Left ventricle myocardium inferior (tissue), 1 donor: ENCODE measurements at regions of chr14 and their contacts with region 1.

Region 1: GRCh38 chr14:96297000-96297399 is 41.0 kb downstream of the BDKRB1 start:
- DNase-seq: no peak
- H3K4me3 ChIP-seq: no peak overlapping the region
- H3K27ac ChIP-seq: no peak overlapping the region
- H3K4me1 ChIP-seq: no peaks in the 10 kb centered on the region
- H3K27me3 ChIP-seq: no peaks in the 10 kb centered on the region
- CTCF ChIP-seq: peak; percentile 56

Region 2: GRCh38 chr14:96167224-96168148 is 129.5 kb before region 1 on chr14:
- intact Hi-C with region 1: no loop called
- DNase-seq: no peak
- H3K4me3 ChIP-seq: no peak overlapping the region
- H3K27ac ChIP-seq: no peak overlapping the region
- H3K4me1 ChIP-seq: no peaks in the 10 kb centered on the region
- H3K27me3 ChIP-seq: peaks cover 68% of the 10 kb centered on the region
- CTCF ChIP-seq: no peak

Region 3: DNA sequence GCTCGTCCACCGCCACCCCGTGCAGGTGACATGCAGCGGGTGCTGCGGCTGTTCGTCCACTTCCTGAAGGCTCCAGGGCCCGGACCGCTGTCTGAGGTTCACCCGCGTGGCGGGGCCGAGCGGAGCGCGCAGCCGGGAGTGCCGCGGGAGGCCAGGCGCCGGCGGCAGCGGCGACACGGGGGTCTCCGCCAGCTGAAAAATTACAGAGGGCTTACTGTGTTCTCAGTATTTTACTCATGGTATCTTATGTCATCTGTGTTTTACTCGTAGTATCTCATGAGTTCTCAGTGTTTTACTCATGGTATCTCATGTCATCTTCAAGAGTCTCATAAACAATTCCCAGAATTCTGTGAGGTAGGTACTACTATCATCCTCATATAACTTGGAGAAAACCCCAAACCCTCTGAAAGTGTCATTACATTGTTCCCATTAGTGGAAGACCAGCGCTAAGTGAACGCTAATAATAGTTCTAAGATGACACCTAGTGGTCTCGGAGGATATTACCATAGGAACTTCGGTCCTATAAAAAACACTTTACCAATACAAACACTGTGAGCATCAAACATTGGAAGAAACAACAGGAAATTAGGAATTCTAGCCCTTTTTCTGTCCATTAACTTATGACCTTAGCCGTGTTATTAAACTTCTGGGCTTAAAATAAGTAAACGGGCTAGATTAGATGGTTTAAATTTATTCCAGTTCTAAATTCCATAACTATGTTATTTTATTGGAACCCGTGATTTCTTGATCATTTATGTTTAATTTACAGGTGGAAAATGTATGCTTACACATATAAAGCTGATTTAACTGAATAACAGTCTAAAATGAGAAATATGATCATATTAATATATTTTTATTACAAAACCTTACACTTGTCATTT is 127.3 kb after region 1 on chr14:
- intact Hi-C with region 1: loop called (anchors 10 kb)
- DNase-seq: no peak
- H3K4me3 ChIP-seq: peak overlapping the region; percentile 64
- H3K27ac ChIP-seq: no peak overlapping the region
- H3K4me1 ChIP-seq: peaks cover 13% of the 10 kb centered on the region
- H3K27me3 ChIP-seq: no peaks in the 10 kb centered on the region
- CTCF ChIP-seq: peak; percentile 82